B cell (primary cell): ENCODE measurements at regions of chr14 and their contacts with region 1.

Region 1: GRCh38 chr14:67526676-67527459 is 6.2 kb upstream of the PLEKHH1 start:
- DNase-seq: peak; percentile 56
- ATAC-seq: peak; percentile 78
- H3K4me3 ChIP-seq: no peak overlapping the region
- H3K4me3 Mint-ChIP-seq: no peak overlapping the region
- H3K27ac ChIP-seq: no peak overlapping the region
- H3K27ac Mint-ChIP-seq: peak overlapping the region; percentile 21
- H3K4me1 ChIP-seq: peaks cover 0 to 4% of the 10 kb centered on the region in 2 donors
- H3K4me1 Mint-ChIP-seq: peaks cover 2% of the 10 kb centered on the region
- H3K27me3 ChIP-seq: peaks cover 0 to 42% (median 18%) of the 10 kb centered on the region in 4 experiments
- H3K27me3 Mint-ChIP-seq: peaks cover 56% of the 10 kb centered on the region
- CTCF ChIP-seq: peak; percentile 60

Region 2: GRCh38 chr14:66824251-66824650 is 702.6 kb before region 1 on chr14:
- CTCF ChIA-PET with region 1: no interaction called
- POLR2A ChIA-PET with region 1: no interaction called
- intact Hi-C with region 1: no loop called
- DNase-seq: no peak
- ATAC-seq: no peak
- H3K4me3 ChIP-seq: no peak overlapping the region
- H3K4me3 Mint-ChIP-seq: no peak overlapping the region
- H3K27ac ChIP-seq: no peak overlapping the region
- H3K27ac Mint-ChIP-seq: no peak overlapping the region
- H3K4me1 ChIP-seq: no peaks in the 10 kb centered on the region
- H3K4me1 Mint-ChIP-seq: no peaks in the 10 kb centered on the region
- H3K27me3 ChIP-seq: no peaks in the 10 kb centered on the region
- H3K27me3 Mint-ChIP-seq: no peaks in the 10 kb centered on the region
- CTCF ChIP-seq: no peak

Region 3: DNA sequence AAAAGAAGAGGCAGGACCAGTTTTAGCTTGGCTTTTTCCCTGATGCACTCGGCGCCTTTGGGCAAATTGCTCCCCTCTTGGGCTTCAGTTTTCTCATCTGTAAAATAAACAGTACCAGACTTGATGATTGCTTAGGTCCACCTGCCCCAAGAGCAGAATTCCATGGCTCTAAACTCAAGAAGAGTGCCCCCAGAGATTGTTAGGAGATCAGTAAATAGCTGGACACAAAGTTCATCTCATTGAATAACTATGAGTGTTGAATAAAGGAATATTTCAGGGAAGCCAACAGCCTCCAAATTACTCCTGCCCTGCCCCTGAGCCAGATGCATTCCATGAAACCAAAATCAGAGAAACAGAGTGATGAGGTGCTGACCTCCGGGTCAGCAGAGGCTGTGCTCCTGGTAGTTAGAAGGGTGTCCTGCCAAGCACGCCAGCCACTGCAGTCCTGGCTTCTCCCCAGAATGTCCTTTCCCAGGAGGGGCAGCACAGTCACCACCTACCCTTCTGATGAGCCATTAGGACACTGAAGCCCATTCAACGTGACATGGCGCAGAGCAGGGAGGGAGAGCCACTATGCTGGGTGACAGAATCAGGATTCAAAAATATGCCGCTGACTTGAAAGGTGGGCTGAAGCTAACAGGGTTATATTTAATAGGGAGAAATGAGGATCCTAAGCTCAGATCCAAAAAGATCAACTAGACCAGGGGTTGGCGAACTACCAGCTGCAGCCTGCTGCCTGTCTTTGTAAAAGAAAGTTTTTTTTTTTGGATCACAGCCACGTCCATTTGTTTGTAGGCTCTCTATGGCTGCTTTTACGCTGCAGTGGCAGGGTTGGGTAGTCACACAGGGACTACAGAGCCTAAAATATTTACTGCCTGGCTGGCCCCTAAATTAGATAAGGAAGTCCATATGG is 80.5 kb before region 1 on chr14:
- CTCF ChIA-PET with region 1: interaction called, 12 read pairs
- POLR2A ChIA-PET with region 1: no interaction called
- intact Hi-C with region 1: no loop called
- DNase-seq: no peak
- ATAC-seq: no peak
- H3K4me3 ChIP-seq: no peak overlapping the region
- H3K4me3 Mint-ChIP-seq: no peak overlapping the region
- H3K27ac ChIP-seq: no peak overlapping the region
- H3K27ac Mint-ChIP-seq: no peak overlapping the region
- H3K4me1 ChIP-seq: no peaks in the 10 kb centered on the region
- H3K4me1 Mint-ChIP-seq: no peaks in the 10 kb centered on the region
- H3K27me3 ChIP-seq: no peaks in the 10 kb centered on the region
- H3K27me3 Mint-ChIP-seq: peaks cover 10% of the 10 kb centered on the region
- CTCF ChIP-seq: no peak

Region 4: DNA sequence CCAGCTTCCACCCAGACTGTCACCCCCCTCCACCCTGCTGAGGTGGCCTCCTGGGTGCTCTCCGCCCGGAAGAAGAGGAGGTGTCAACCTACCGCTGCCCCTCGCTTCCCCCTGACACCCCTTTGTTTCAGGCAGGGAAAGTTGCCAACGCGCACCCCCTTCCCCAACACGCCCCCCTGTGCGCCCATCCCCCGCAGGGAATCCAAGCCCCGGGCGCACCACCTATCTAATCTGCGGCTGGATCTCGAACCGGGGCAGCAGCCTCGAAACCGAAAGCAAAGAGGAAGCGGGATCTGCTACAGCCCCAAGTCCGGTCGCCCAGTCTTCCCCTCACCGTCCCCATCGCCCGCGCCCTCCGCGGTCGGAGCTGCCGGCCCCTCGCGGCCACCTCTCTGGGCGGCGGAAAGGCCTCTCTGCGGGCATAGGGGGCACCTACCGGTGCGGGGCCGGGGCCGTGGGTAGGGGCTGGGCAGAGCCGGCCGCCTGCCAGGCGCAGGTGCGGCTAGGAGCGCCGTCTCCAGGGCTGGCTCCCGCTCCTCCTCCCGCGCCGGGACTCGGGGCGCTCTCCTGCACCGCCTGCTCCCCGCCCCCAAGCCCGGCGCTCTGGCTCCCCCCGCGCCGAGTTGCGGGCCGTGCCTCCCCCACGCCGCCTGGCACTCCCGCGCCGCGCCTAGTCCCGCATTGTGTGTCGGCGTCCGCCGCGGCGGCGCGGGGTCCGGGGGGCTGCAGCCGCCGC is 12.1 kb before region 1 on chr14:
- CTCF ChIA-PET with region 1: interaction called, 20 read pairs
- POLR2A ChIA-PET with region 1: no interaction called
- intact Hi-C with region 1: no loop called
- DNase-seq: peak; percentile 66
- ATAC-seq: peak; percentile 50
- H3K4me3 ChIP-seq: peak overlapping the region; percentile 15 to 89 (median 80)
- H3K4me3 Mint-ChIP-seq: peak overlapping the region; percentile 93
- H3K27ac ChIP-seq: peak overlapping the region; percentile 65 to 73
- H3K27ac Mint-ChIP-seq: peak overlapping the region; percentile 93
- H3K4me1 ChIP-seq: peaks cover 37 to 38% of the 10 kb centered on the region in 2 donors
- H3K4me1 Mint-ChIP-seq: peaks cover 40% of the 10 kb centered on the region
- H3K27me3 ChIP-seq: no peaks in the 10 kb centered on the region
- H3K27me3 Mint-ChIP-seq: no peaks in the 10 kb centered on the region
- CTCF ChIP-seq: no peak

Region 5: GRCh38 chr14:67539116-67539515 is 12.2 kb after region 1 on chr14:
- CTCF ChIA-PET with region 1: interaction called, 14 read pairs
- POLR2A ChIA-PET with region 1: no interaction called
- intact Hi-C with region 1: no loop called
- DNase-seq: no peak
- ATAC-seq: no peak
- H3K4me3 ChIP-seq: no peak overlapping the region
- H3K4me3 Mint-ChIP-seq: no peak overlapping the region
- H3K27ac ChIP-seq: no peak overlapping the region
- H3K27ac Mint-ChIP-seq: no peak overlapping the region
- H3K4me1 ChIP-seq: peaks cover 10 to 18% of the 10 kb centered on the region in 2 donors
- H3K4me1 Mint-ChIP-seq: peaks cover 10% of the 10 kb centered on the region
- H3K27me3 ChIP-seq: peaks cover 0 to 43% (median 24%) of the 10 kb centered on the region in 4 experiments
- H3K27me3 Mint-ChIP-seq: peaks cover 43% of the 10 kb centered on the region
- CTCF ChIP-seq: no peak

Region 6: DNA sequence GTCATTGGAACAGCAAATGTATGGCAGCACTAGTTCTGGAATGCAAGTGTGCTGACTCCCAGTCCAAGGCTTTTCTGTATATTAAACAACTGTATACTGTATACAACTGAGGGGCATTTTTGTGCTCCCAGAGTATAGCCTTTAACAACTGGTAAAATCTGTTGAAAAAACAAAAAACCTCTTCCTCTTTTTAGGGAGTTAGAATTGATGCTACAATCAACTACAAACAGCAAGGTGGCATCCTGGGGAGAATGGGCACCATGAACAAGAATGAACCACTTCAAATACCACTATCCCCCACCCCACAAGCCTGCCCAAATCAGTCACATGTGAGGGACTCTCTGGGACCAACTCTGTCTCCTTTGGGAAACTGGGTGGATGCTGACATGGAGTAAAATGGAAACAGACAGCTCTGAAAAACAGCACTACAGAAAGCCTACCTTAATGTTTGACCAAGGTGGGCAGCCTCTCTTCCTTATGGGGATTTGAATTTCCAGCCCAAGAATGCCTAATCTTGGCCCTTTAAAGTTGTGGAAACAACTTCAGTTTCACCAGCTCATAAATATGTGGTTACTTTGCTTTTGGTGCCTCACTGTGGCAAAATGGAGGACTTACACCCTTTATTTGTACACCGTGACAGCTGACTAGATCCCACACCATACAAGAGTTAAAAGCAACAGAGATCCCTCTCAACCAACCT is 140.0 kb after region 1 on chr14:
- CTCF ChIA-PET with region 1: interaction called, 4 read pairs
- POLR2A ChIA-PET with region 1: no interaction called
- intact Hi-C with region 1: loop called (anchors 1 kb)
- DNase-seq: peak; percentile 74
- ATAC-seq: peak; percentile 75
- H3K4me3 ChIP-seq: no peak overlapping the region
- H3K4me3 Mint-ChIP-seq: peak overlapping the region; percentile 60
- H3K27ac ChIP-seq: peak overlapping the region; percentile 45 to 74
- H3K27ac Mint-ChIP-seq: peak overlapping the region; percentile 78
- H3K4me1 ChIP-seq: peaks cover 22 to 23% of the 10 kb centered on the region in 2 donors
- H3K4me1 Mint-ChIP-seq: peaks cover 51% of the 10 kb centered on the region
- H3K27me3 ChIP-seq: no peaks in the 10 kb centered on the region
- H3K27me3 Mint-ChIP-seq: no peaks in the 10 kb centered on the region
- CTCF ChIP-seq: peak; percentile 80

Region 7: GRCh38 chr14:67763158-67763788 is 236.4 kb after region 1 on chr14:
- CTCF ChIA-PET with region 1: no interaction called
- POLR2A ChIA-PET with region 1: no interaction called
- intact Hi-C with region 1: no loop called
- DNase-seq: no peak
- ATAC-seq: no peak
- H3K4me3 ChIP-seq: no peak overlapping the region
- H3K4me3 Mint-ChIP-seq: no peak overlapping the region
- H3K27ac ChIP-seq: no peak overlapping the region
- H3K27ac Mint-ChIP-seq: no peak overlapping the region
- H3K4me1 ChIP-seq: peaks cover 12 to 14% of the 10 kb centered on the region in 2 donors
- H3K4me1 Mint-ChIP-seq: peaks cover 16% of the 10 kb centered on the region
- H3K27me3 ChIP-seq: no peaks in the 10 kb centered on the region
- H3K27me3 Mint-ChIP-seq: no peaks in the 10 kb centered on the region
- CTCF ChIP-seq: no peak